ENCODE measurements at regions of chr21 and their contacts with region 1.

Region 1: DNA sequence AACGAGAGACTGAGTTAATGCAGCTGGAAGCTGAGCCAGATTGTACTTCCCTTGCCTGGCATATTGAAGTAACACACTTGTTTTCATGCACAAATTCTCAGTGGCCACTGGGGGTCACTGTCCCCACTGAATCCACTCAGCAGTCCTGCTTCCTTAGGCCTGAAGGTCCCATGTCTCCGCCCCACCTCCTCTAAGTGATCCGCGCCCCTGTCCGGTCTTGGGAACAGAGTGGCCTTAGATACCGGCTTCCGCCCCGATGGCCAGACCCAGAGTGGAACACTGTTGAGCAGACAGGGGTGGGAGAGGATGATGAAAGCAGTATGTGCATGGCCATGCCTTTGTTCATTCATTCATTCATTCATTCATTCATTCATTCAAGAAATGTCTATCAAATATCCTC is 34.8 kb downstream of the CHAF1B start:
- DNase-seq: peak; percentile 93
- H3K4me3 ChIP-seq: no peak overlapping the region
- H3K27ac ChIP-seq: no peak overlapping the region
- H3K4me1 ChIP-seq: peaks cover 2% of the 10 kb centered on the region
- H3K27me3 ChIP-seq: no peaks in the 10 kb centered on the region
- CTCF ChIP-seq: peak; percentile 76 to 80
- POLR2A ChIP-seq: no peak

Region 2: DNA sequence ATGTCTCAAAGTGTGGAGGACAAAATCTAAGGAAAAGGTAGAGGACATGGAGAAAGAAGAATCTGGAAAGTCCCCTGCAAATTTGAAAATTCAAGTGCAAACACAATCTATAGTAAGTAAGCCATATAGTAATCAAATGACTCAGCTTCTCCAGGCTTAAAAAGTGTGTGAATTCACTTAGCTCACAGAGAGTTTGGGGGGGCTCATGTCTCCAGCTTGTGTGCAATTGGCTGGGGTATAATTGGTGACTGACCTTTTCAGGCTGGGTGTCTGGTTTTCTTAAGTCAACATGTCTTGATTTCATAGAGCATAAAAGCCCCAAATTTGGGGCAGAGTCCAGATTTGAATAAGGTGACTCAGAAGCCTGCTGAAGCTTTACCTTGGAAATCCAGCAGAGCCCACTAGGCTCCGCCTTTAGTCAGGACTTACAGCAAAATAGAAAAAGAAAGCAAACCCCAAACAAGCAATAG is 51.3 kb after region 1 on chr21:
- CTCF ChIA-PET with region 1: no interaction called
- POLR2A ChIA-PET with region 1: no interaction called
- dilution Hi-C with region 1: no loop called
- intact Hi-C with region 1: no loop called
- DNase-seq: no peak
- H3K4me3 ChIP-seq: no peak overlapping the region
- H3K27ac ChIP-seq: no peak overlapping the region
- H3K4me1 ChIP-seq: peaks cover 2% of the 10 kb centered on the region
- H3K27me3 ChIP-seq: no peaks in the 10 kb centered on the region
- CTCF ChIP-seq: no peak
- POLR2A ChIP-seq: no peak

Region 3: GRCh38 chr21:36504067-36505058 is 84.4 kb after region 1 on chr21:
- CTCF ChIA-PET with region 1: interaction called, 8 read pairs
- POLR2A ChIA-PET with region 1: no interaction called
- dilution Hi-C with region 1: no loop called
- intact Hi-C with region 1: loop called (anchors 2 kb)
- DNase-seq: peak; percentile 55
- H3K4me3 ChIP-seq: no peak overlapping the region
- H3K27ac ChIP-seq: no peak overlapping the region
- H3K4me1 ChIP-seq: no peaks in the 10 kb centered on the region
- H3K27me3 ChIP-seq: no peaks in the 10 kb centered on the region
- CTCF ChIP-seq: peak; percentile 61 to 67
- POLR2A ChIP-seq: no peak

Region 4: DNA sequence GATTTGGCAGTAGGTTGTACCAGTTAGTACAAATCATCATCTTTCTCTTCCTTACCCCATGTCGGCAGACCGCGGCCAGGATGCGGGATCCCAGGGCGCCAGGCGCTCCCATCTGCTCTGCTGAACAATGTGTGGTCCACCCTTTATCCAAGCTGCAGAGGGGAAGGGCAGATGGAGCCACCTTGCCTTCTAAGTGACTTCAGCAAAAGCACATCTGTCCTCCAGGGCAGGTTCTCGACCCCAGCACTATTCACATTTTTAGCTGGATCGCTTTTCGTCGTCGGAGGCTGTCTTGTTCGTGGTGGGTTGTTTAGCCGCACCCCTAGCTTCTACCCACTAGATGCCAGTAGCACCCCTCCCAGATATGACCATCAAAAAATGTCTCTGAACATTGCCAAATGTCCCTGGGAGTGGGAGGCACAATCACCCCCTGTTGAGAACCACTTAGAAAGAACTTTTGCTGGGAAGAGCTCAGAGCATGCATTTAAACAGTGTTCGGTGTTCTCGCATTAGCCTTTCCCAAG is 220.8 kb after region 1 on chr21:
- CTCF ChIA-PET with region 1: interaction called, 4 read pairs
- POLR2A ChIA-PET with region 1: no interaction called
- dilution Hi-C with region 1: no loop called
- intact Hi-C with region 1: loop called (anchors 5 kb)
- DNase-seq: no peak
- H3K4me3 ChIP-seq: no peak overlapping the region
- H3K27ac ChIP-seq: no peak overlapping the region
- H3K4me1 ChIP-seq: peaks cover 27% of the 10 kb centered on the region
- H3K27me3 ChIP-seq: peaks cover 0 to 2% of the 10 kb centered on the region in 2 experiments
- CTCF ChIP-seq: peak in 1 of 2 donors; percentile 5
- POLR2A ChIP-seq: no peak

Region 5: DNA sequence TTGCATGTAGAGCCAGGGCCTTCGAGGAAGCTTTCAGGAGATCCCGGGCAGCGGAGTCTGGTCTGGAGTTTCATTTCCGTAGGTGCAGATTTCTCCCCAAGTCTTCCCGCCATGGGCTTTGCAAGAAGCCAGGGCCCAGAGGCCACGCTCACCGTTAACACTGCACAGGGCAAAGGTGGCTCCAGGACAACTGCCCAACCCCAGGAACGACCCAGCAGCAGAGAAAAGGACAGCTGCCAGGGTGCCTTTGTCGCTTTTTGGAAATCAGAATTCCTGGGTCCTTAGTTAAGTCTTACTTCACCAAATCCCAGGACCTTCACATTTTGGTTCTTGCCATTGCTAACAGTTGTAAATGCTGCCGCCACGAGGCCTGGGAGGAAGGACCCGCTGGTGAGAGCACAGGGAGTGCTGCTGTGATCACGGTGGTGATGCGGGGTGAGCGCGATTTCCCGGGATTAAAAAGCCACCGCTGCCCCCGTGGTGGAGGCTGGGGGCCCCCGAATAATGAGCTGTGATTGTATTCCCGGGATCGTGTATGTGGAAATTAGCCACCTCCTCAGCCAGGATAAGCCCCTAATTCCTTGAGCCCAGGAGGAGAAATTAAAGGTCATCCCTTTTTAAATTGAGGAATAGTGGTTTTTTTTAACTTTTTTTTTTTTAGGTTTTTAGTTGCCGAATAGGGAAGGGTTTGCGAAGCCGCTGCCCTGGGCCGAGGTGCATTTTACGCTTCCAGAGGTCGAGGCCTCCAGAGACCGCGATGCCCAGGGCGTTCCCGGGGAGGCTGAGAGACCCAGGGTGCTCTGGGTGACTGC is 287.2 kb after region 1 on chr21:
- CTCF ChIA-PET with region 1: no interaction called
- POLR2A ChIA-PET with region 1: no interaction called
- dilution Hi-C with region 1: no loop called
- intact Hi-C with region 1: loop called (anchors 5 kb)
- DNase-seq: no peak
- H3K4me3 ChIP-seq: no peak overlapping the region
- H3K27ac ChIP-seq: no peak overlapping the region
- H3K4me1 ChIP-seq: no peaks in the 10 kb centered on the region
- H3K27me3 ChIP-seq: peaks cover 92 to 100% of the 10 kb centered on the region in 2 experiments
- CTCF ChIP-seq: no peak
- POLR2A ChIP-seq: no peak

Region 6: GRCh38 chr21:36917471-36918158 is 497.6 kb after region 1 on chr21:
- CTCF ChIA-PET with region 1: interaction called, 11 read pairs
- POLR2A ChIA-PET with region 1: no interaction called
- dilution Hi-C with region 1: no loop called
- intact Hi-C with region 1: no loop called
- DNase-seq: peak; percentile 54
- H3K4me3 ChIP-seq: no peak overlapping the region
- H3K27ac ChIP-seq: no peak overlapping the region
- H3K4me1 ChIP-seq: no peaks in the 10 kb centered on the region
- H3K27me3 ChIP-seq: no peaks in the 10 kb centered on the region
- CTCF ChIP-seq: peak; percentile 57 to 61
- POLR2A ChIP-seq: no peak

Measured in endothelial cell of umbilical vein (primary cell).